Activated CD8-positive, alpha-beta T cell treated with anti-CD3 and anti-CD28 coated beads, Interleukin-2, amount 10 ng/mL, durations not matched to agents 7 days and 5 days (primary cell): ENCODE measurements at regions of chr2 and their contacts with region 1.

Region 1: DNA sequence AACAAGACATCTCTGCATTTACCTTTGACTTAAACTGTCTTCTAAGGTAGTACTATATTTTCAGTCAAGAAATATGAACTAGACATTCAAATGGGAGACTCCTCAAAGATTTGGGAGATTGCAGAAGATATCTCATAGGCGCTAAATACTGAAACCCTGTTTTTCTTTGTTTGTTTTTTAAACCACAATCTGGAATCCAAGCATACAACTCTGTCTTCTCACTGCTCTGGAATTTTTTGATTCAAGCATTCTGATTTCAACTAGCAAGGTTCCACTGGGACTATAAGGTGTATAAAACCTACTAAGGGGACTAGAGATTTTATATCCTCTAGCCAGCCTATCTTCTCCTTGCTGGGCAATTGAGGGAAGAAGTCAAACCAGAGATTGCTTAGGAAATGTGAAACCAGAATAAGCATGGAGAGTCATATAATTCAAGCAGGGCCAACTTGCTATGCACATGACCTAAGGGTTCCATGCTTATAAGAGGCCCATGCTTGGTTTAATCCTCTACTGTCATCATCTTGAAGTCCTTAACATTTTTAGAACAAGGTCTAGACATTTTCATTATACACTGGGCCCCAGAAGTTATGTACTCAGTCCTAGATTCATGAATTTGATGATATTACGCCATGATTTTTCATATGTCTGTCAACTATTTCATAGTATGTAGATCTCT is 405.5 kb downstream of the PARD3B start:
- DNase-seq: no peak
- ATAC-seq: no peak
- H3K4me3 Mint-ChIP-seq: no peak overlapping the region
- H3K27ac Mint-ChIP-seq: no peak overlapping the region
- H3K4me1 Mint-ChIP-seq: peaks cover 62% of the 10 kb centered on the region
- H3K27me3 Mint-ChIP-seq: no peaks in the 10 kb centered on the region

Region 2: DNA sequence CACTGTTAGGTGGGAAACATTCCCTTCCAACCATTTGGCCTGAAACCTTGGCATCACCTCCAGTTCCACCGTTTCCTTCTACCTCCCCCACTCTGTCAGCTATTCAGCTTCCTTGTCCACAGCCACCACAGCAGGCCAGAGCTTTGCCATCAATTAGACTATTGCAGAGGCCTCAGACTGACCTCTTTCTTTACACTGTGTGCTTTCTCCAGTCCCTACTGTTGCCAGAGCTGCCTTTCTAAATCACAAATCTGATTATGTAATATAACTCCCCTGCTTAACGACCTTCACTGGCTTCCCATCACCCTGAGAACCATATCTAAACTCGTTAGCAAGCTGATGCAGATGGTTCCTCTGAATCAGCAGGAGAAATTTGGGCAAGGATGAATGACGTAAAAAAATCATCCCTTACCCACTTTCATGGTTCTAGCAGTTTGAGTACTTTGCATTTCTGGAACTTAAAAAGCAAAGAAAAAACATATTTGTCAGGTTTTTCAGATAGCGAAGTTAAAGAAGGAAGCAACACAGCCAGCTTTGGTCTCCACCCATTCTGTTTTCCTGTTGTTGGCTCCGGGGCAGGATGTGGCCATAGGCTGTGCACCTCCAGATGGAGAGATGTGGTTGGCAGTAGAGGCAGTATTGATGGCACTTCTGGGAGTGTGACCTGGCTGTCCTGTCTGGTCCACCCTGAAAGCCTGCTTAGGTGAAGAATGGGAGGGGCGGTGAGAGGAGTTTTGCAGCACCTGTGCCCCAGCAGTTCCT is 16.6 kb after region 1 on chr2:
- CTCF ChIA-PET with region 1: interaction called, 10 read pairs
- POLR2A ChIA-PET with region 1: no interaction called
- DNase-seq: peak; percentile 79
- ATAC-seq: peak; percentile 93
- H3K4me3 Mint-ChIP-seq: peak overlapping the region; percentile 15
- H3K27ac Mint-ChIP-seq: peak overlapping the region; percentile 92
- H3K4me1 Mint-ChIP-seq: peaks cover 54% of the 10 kb centered on the region
- H3K27me3 Mint-ChIP-seq: no peaks in the 10 kb centered on the region